ENCODE measurements at regions of chr11 and their contacts with region 1.

Region 1: DNA sequence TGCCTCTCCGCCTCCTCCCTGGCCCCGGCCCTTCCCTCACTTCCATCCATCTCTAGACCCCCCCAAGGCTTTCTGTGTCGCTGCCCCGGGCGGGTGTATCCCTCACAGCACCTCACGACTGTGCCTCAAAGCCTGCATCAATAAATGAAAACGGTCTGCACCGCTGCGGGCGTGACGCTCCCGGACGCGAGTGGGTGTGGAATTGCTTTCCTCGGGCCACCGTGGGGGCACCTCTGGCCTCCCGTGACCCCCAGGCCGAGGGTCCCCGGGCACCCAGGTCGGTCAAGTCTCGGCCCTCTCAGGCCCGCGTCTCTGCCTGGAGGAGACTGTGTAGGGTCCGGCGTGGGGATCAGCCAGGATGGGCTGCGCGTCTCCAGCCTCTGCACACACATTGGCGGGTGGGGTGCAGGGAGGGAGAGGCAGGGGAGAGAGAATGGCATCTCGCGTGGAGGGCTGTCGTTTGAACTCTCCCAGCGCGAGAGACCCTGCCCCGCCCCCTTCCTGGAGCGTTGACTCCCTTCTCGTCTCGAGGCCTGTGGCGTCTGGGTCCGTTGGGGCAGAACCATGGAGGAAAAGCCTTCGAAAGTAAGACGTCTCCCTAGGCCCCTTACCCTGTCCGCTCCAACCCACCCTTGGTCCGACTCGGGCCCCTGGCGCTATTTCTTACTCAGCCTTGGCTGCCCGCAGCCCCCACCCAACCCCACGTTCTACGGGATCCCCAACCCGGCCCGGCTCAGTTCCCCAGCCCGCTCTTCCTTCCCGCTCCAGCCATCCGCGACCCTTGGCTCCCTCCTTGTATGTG is at the start of gene CATSPERZ:
- DNase-seq: no peak
- H3K27ac ChIP-seq: peak within 1 kb of the TSS; percentile 100
- CTCF ChIP-seq: no peak

Region 2: GRCh38 chr11:64204464-64204989 is 95.5 kb before region 1 on chr11:
- CTCF ChIA-PET with region 1: interaction called, 30 read pairs
- POLR2A ChIA-PET with region 1: interaction called, 3 read pairs
- DNase-seq: peak; percentile 89
- H3K27ac ChIP-seq: peak overlapping the region; percentile 60
- CTCF ChIP-seq: peak; percentile 84

Region 3: DNA sequence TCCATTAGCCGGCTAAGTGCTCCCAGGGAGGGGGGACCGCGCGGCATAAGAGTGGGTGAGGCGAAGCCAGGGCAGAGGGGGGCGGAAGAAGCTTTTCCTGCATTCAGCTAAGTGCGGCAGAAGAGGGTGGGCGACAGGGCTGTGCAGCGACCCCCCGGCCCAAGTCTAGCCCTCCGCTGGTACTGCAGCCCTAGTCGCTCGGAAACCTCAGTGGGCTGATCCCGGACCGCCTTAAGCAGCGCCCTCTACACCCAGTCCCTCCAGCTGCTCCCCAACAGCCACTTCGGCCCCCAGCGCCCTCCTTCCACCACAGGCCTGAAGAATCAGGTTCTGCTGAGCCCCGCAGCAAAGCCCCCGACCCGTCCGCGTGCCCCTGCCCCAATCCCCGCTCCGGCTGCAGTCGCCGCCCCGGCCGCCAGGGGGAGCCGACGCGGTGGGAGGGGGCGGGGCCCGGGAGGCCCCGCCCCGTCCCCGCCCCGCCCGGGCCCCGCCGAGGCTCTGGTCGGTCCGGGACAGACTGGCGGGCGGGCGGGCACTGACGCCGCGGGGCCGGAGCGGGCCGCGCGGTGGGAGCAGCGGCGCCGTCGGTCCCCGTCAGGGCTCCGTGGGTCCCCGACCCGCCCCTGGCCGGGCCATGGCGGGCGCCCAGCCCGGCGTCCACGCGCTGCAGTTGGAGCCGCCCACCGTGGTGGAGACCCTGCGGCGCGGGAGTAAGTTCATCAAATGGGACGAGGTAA is 48.9 kb before region 1 on chr11 and contains the start of gene PLCB3:
- CTCF ChIA-PET with region 1: interaction called, 19 read pairs
- POLR2A ChIA-PET with region 1: no interaction called
- DNase-seq: no peak
- H3K27ac ChIP-seq: peak within 1 kb of the TSS; percentile 98
- CTCF ChIP-seq: peak; percentile 87

Region 4: DNA sequence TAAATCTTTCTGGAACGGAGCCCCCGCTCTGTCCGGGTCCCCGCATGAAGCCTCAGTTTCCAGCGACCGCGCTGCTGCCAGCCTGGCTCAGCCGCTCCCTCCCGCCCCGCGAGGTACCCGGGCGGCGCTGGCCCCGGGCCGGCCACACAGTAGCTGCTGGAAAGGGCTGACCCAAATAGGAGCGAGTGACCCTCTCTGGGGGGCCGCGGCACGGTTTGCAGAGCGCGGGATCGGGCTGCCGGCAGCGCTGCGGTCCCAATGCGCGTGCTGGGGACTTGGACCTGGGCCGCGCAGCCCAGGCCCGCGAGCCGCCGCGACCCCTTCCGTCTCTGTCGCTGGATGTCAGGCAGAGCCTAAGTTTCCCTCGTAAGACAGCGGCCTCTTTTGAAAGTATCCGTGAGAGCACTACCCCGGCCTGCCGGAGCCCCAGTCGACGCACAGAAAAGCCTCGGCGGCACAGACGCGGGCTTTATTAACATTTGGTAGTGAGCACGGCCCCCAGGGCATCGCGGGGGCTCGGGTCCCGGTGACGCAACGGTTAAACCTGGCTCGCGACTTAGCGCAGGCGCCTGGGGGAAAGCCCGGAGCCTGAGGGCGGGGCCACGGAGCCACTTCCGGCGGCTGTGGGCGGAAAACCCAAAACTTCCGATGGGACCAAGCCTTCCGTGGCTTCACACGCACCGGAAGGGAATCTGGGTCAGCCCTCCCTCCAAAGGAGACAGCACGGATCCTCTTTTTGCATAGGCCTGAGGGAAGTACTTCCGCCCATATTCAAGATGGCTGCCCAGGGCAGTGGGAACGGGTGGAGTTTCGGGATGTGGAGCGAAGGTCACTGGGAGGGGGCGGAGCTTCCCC is 30.4 kb before region 1 on chr11:
- CTCF ChIA-PET with region 1: interaction called, 18 read pairs
- POLR2A ChIA-PET with region 1: interaction called, 5 read pairs
- DNase-seq: peak; percentile 91
- H3K27ac ChIP-seq: peak overlapping the region; percentile 99
- CTCF ChIP-seq: no peak

Region 5: GRCh38 chr11:64276653-64277431 is 23.2 kb before region 1 on chr11:
- CTCF ChIA-PET with region 1: interaction called, 10 read pairs
- POLR2A ChIA-PET with region 1: no interaction called
- DNase-seq: peak; percentile 86
- H3K27ac ChIP-seq: peak overlapping the region; percentile 98
- CTCF ChIP-seq: no peak

Region 6: GRCh38 chr11:64287711-64288289 is 12.2 kb before region 1 on chr11:
- CTCF ChIA-PET with region 1: interaction called, 12 read pairs
- POLR2A ChIA-PET with region 1: interaction called, 7 read pairs
- DNase-seq: no peak
- H3K27ac ChIP-seq: peak overlapping the region; percentile 97
- CTCF ChIP-seq: no peak

Measured in RWPE1 (cell line).